ENCODE measurements at regions of chr21 and their contacts with region 1.

Region 1: GRCh38 chr21:43775795-43776430 is at the start of gene CSTB:
- DNase-seq: no peak
- H3K4me3 ChIP-seq: peak within 1 kb of the TSS; percentile 81
- H3K27ac ChIP-seq: peak within 1 kb of the TSS; percentile 92
- H3K4me1 ChIP-seq: peaks cover 16% of the 10 kb centered on the region
- H3K27me3 ChIP-seq: no peaks in the 10 kb centered on the region
- CTCF ChIP-seq: no peak
- POLR2A ChIP-seq: peak in 1 of 2 donors; percentile 59
- total RNA-seq, gene CSTB: 173 TPM

Region 2: GRCh38 chr21:43659136-43660000 is 116.5 kb before region 1 on chr21 and contains the starts of genes HSF2BP and RRP1B:
- intact Hi-C with region 1: loop called (anchors 5 kb)
- DNase-seq: no peak
- H3K4me3 ChIP-seq: peak within 1 kb of the TSS; percentile 80 to 99
- H3K27ac ChIP-seq: peak within 1 kb of the TSS; percentile 79
- H3K4me1 ChIP-seq: peaks cover 20% of the 10 kb centered on the region
- H3K27me3 ChIP-seq: no peaks in the 10 kb centered on the region
- CTCF ChIP-seq: no peak
- POLR2A ChIP-seq: peak in 1 of 2 donors; percentile 52
- total RNA-seq, gene HSF2BP: 2.7 TPM
- total RNA-seq, gene RRP1B: 18.9 TPM

Region 3: DNA sequence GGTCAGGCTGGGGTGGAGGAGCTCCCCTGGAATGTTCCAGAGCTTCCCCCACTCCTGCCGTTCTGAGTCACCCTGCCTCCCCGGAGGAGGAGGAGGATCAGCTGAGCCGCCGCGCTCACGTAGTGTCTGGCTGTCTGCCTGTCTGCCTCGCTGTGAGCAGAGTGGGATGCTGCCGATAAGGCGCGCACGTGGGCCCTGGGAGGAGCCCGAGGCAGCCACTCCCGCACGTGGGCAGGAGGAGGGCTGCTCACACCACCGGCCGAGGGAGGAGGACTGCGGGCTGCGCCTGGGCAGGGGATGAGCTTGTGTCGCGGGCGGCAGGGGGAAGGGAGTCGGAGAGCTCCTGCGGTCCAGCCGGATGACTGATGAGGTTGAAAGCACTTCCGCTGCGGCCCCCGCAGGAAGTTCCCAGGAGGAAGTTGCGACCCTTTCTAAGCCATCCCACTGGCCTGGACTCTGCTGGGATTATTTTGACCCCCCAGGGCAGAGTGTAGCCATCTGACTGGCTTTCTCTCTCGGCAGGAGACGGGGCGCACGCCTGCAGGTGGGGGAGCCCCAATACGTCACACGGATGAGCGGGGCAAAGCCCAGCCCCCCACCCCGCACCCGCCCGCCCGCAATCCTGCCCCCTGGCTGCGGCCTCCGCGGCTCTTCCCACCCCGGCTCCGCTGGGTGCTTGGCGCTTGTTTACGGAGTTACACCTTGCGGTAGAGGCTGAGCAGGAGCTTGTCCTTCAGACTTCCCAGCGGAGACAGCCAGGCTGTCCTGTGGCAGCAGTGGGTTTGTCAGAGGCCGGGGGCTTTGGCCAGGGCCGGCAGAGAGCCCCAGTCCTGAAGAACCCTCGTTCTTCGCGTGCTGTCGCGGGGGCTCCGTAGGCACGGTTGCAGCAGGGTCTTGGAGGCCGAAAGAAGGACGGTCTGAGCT is 47.2 kb before region 1 on chr21:
- intact Hi-C with region 1: loop called (anchors 10 kb)
- DNase-seq: peak in 1 of 2 donors; percentile 99
- H3K4me3 ChIP-seq: peak overlapping the region; percentile 53 to 57
- H3K27ac ChIP-seq: peak overlapping the region; percentile 96
- H3K4me1 ChIP-seq: peaks cover 82% of the 10 kb centered on the region
- H3K27me3 ChIP-seq: no peaks in the 10 kb centered on the region
- CTCF ChIP-seq: peak in 1 of 3 experiments; percentile 69
- POLR2A ChIP-seq: peak in 1 of 2 donors; percentile 72

Region 4: GRCh38 chr21:43984905-43985689 is 209.2 kb after region 1 on chr21:
- intact Hi-C with region 1: no loop called
- DNase-seq: no peak
- H3K4me3 ChIP-seq: no peak overlapping the region
- H3K27ac ChIP-seq: no peak overlapping the region
- H3K4me1 ChIP-seq: peaks cover 16% of the 10 kb centered on the region
- H3K27me3 ChIP-seq: no peaks in the 10 kb centered on the region
- CTCF ChIP-seq: no peak
- POLR2A ChIP-seq: no peak

Measured in vagina (tissue), 2 donors.